Activated CD8-positive, alpha-beta T cell treated with anti-CD3 and anti-CD28 coated beads for 36 hours (primary cell): ENCODE measurements at regions of chr20 and their contacts with region 1.

Region 1: GRCh38 chr20:45890985-45891983 is at the starts of genes CTSA and NEURL2:
- DNase-seq: peak; percentile 95
- ATAC-seq: peak; percentile 70
- H3K4me3 Mint-ChIP-seq: peak within 1 kb of the TSS; percentile 88
- H3K27ac Mint-ChIP-seq: peak within 1 kb of the TSS; percentile 89
- H3K4me1 Mint-ChIP-seq: peaks cover 33% of the 10 kb centered on the region
- H3K27me3 Mint-ChIP-seq: no peaks in the 10 kb centered on the region
- CTCF ChIP-seq: no peak
- total RNA-seq, gene CTSA: 34.5 to 40.2 TPM
- total RNA-seq, gene NEURL2: 2.4 to 2.9 TPM

Region 2: GRCh38 chr20:45857114-45857881 is 34.0 kb before region 1 on chr20 and contains the starts of genes ACOT8 and ZSWIM3:
- CTCF ChIA-PET with region 1: no interaction called
- POLR2A ChIA-PET with region 1: interaction called, 19 read pairs
- intact Hi-C with region 1: no loop called
- DNase-seq: peak; percentile 98
- ATAC-seq: peak; percentile 96
- H3K4me3 Mint-ChIP-seq: peak within 1 kb of the TSS; percentile 97
- H3K27ac Mint-ChIP-seq: peak within 1 kb of the TSS; percentile 99
- H3K4me1 Mint-ChIP-seq: peaks cover 42% of the 10 kb centered on the region
- H3K27me3 Mint-ChIP-seq: no peaks in the 10 kb centered on the region
- CTCF ChIP-seq: no peak
- total RNA-seq, gene ACOT8: 18.5 to 21.2 TPM
- total RNA-seq, gene ZSWIM3: 3.5 to 3.6 TPM

Region 3: DNA sequence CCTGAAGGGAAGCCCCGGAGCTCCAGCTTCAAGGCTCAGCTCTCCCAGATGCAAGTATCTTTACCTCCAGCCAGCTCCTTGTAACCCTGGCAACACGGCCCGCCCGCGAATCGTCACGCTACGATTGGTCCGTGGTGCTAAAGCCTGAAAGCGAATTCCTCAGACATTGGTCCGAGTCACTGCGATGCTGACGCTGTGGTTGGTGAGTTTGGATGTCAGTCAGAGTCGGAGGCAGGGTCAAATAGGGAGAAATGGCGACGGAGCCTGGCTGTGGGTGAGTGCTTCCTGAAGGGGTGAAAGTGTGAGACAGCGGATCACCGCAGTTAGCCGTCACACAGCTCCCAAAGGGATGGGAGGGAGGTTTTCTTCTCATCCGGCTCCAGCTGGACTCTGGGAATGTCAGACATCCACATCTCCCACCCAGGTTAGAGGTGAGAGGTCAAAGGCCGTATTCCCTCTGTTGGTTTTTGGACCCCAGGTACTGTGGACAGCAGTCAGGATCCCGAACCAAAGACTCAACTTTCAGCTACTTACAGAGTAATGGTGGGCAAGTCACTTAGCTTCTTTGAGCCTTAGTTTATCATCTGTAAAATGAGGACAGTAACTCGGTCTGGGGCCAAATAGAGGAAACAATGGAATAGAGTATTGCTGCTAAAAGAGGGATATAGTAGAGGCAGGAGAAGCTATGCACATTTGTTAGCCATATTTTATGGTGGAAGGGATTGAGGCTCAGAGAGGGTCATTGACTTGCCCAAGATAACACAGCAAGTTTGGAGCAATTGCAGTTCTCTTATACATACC is 10.1 kb before region 1 on chr20 and contains the start of gene ZSWIM1:
- CTCF ChIA-PET with region 1: interaction called, 11 read pairs
- POLR2A ChIA-PET with region 1: interaction called, 23 read pairs
- intact Hi-C with region 1: no loop called
- DNase-seq: peak; percentile 100
- ATAC-seq: peak; percentile 99
- H3K4me3 Mint-ChIP-seq: peak within 1 kb of the TSS; percentile 94
- H3K27ac Mint-ChIP-seq: peak within 1 kb of the TSS; percentile 93
- H3K4me1 Mint-ChIP-seq: peaks cover 43% of the 10 kb centered on the region
- H3K27me3 Mint-ChIP-seq: no peaks in the 10 kb centered on the region
- CTCF ChIP-seq: no peak
- total RNA-seq, gene ZSWIM1: 8.2 to 9.1 TPM

Region 4: DNA sequence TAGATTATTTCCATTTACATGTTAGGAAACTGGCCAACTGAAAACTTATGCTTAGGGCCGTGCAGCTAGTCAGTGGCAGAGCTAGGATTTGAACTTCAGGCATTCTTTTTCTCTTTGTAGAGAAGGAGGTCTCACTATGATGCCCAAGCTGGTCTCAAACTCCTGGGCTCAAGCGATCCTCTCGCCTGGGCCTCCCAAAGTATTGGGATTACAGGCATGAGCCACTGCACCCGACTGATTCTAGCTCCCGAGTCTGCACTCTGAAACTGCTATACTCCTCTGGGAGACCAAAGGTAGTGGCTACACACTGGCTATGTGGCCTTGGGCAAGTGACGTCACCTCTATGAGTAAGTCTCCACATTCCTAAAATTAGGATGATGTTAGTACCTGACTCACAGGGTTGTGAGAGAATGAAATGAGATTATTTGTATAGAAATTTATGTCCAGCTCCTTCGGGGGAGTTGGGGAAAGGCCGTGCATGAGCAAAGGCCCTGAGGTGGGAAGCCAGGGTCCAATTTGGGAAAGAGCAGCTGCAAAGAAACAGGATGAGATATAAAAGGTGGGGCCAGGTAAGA is 14.3 kb after region 1 on chr20:
- CTCF ChIA-PET with region 1: interaction called, 3 read pairs
- POLR2A ChIA-PET with region 1: interaction called, 15 read pairs
- intact Hi-C with region 1: no loop called
- DNase-seq: no peak
- ATAC-seq: no peak
- H3K4me3 Mint-ChIP-seq: no peak overlapping the region
- H3K27ac Mint-ChIP-seq: no peak overlapping the region
- H3K4me1 Mint-ChIP-seq: peaks cover 2% of the 10 kb centered on the region
- H3K27me3 Mint-ChIP-seq: no peaks in the 10 kb centered on the region
- CTCF ChIP-seq: no peak

Region 5: GRCh38 chr20:45910670-45911485 is 19.6 kb after region 1 on chr20:
- CTCF ChIA-PET with region 1: no interaction called
- POLR2A ChIA-PET with region 1: interaction called, 15 read pairs
- intact Hi-C with region 1: no loop called
- DNase-seq: peak; percentile 100
- ATAC-seq: peak; percentile 96
- H3K4me3 Mint-ChIP-seq: peak overlapping the region; percentile 86
- H3K27ac Mint-ChIP-seq: peak overlapping the region; percentile 79
- H3K4me1 Mint-ChIP-seq: peaks cover 17% of the 10 kb centered on the region
- H3K27me3 Mint-ChIP-seq: peaks cover 8% of the 10 kb centered on the region
- CTCF ChIP-seq: no peak